ENCODE measurements at regions of chr5 and their contacts with region 1.

Region 1: GRCh38 chr5:138035605-138036537 is 3.0 kb upstream of the FAM13B start:
- H3K4me3 Mint-ChIP-seq: no peak overlapping the region
- H3K27ac Mint-ChIP-seq: no peak overlapping the region
- H3K4me1 Mint-ChIP-seq: peaks cover 26% of the 10 kb centered on the region
- H3K27me3 Mint-ChIP-seq: peaks cover 7% of the 10 kb centered on the region

Region 2: DNA sequence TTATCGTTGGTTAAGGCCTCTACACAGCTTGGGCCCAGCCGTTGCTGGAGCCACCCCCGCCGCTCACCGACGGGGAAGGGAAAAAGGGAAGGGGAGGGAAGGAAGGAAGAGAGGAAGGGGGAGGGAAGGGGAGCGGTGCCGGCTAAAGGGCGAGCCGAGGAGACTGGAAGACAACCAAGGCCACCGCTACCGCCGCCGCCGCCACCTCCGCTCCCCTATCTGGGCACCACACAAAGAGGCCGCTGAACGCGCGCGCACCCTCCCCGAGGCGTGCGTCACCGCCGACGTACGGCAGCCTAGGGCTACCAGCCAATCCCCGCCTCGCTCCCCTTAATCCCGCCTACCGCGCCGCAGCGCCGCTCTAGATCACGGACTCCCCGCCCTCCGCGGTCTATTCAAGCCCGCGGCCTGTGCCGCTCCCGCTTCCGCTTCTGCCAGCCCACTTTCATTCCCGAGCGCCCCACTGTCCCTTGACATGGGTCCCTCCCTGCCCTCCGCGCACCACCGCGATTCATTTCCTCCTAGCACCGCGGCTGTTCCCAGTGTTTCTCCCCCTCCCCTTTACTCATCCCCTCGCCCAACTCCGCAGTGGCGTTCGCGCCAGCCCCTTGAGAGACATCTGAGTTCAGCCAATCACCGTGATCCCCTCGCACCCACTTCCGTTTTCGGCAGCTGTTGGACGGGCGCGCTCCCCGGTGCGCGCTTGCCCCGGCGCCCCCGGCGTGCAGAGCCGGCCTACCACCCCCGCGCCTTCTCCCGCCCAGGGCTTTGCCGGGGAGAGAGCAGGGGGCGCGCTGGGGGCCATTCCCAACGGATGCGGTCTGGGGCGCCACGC is 281.5 kb before region 1 on chr5 and contains the start of gene HNRNPA0:
- intact Hi-C with region 1: loop called (anchors 2 kb)
- H3K4me3 Mint-ChIP-seq: peak within 1 kb of the TSS; percentile 99
- H3K27ac Mint-ChIP-seq: peak within 1 kb of the TSS; percentile 100
- H3K4me1 Mint-ChIP-seq: peaks cover 15% of the 10 kb centered on the region
- H3K27me3 Mint-ChIP-seq: no peaks in the 10 kb centered on the region

Region 3: DNA sequence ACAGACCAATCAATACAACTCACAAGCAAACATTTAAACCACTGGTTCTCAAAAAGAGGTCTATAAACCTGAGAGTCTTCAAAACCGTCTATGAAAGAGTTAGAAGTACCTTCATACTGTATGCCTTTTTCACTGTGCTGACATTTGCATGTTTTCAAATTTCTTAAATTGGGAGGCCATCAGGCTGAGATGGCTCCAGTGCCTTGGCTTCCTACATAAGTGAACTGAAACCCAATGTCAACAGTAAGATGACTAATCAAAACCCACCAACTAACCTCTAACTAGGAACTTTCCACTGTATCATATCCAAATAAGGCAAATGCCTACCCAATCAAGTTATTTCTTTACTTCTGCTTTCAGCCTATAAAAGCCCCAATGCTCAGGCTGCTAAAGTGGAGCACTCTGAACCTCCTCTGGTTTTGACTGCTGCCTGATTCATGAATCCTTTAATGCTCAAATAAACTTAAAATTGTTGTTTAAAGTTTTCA is 38.1 kb before region 1 on chr5:
- intact Hi-C with region 1: loop called (anchors 5 kb)
- H3K4me3 Mint-ChIP-seq: no peak overlapping the region
- H3K27ac Mint-ChIP-seq: peak overlapping the region; percentile 12
- H3K4me1 Mint-ChIP-seq: peaks cover 24% of the 10 kb centered on the region
- H3K27me3 Mint-ChIP-seq: no peaks in the 10 kb centered on the region

Region 4: DNA sequence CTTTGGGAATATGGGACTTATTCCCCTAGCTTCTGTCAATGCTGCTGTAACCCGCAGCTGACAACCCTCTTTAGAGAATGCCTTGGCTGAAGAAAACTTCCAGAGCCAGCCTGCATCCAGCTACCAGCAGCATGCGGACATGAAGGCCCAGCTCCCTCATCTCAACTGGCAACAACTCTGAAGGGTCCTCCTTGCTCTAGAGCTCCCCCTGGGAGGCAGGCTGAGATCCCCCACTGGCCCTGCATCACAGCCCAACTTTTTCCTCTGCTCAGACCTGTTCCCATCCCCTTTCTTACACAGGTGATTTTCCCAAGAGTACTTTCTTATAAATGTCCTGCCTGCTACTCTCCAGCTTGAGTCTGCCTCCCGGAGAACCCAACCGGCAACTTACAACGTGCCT is 29.2 kb after region 1 on chr5:
- intact Hi-C with region 1: loop called (anchors 1 kb)
- H3K4me3 Mint-ChIP-seq: no peak overlapping the region
- H3K27ac Mint-ChIP-seq: no peak overlapping the region
- H3K4me1 Mint-ChIP-seq: peaks cover 15% of the 10 kb centered on the region
- H3K27me3 Mint-ChIP-seq: peaks cover 5% of the 10 kb centered on the region

Region 5: DNA sequence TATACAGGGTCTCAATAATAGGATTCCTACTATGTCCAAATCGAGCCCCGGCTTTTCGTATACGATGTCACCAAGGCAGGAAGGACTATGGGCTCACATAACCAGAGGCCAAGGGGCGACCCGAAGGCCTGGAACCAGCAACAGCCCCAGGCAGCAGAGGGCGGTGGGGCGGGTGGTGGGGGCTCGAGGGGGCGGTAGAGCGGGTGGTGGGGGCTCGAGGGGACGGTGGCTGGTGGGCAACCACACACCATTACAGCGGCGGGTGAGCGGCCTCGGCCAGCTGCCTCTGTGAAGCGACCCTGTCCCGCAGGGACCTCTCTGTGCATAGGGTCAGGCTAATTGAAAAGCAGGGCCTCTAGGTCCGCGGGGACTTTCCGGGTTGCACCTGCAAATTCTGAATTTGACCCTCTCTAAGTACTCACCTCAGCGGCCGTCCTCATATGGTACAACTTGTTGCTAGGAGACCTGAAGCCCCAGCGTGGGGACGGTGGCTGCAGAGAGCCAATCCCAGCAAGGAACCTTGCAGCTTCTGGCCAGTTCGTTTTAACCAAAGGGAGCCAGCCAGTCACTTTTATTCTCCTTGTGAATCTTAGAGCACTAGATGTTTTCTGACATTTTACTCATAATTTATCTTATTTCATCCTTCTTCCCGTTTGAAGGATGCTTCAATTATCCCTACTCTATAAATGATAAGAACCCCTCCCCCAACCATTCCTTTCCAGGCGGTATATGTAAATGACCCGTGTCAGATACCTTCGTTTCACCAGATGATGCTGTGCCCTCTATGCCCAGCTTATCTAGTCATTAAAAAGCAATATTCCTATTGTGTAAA is 103.3 kb after region 1 on chr5 and contains the start of gene NME5:
- intact Hi-C with region 1: loop called (anchors 2 kb)
- H3K4me3 Mint-ChIP-seq: peak within 1 kb of the TSS; percentile 23
- H3K27ac Mint-ChIP-seq: no peak within 1 kb of the TSS
- H3K4me1 Mint-ChIP-seq: peaks cover 15% of the 10 kb centered on the region
- H3K27me3 Mint-ChIP-seq: peaks cover 55% of the 10 kb centered on the region

Region 6: DNA sequence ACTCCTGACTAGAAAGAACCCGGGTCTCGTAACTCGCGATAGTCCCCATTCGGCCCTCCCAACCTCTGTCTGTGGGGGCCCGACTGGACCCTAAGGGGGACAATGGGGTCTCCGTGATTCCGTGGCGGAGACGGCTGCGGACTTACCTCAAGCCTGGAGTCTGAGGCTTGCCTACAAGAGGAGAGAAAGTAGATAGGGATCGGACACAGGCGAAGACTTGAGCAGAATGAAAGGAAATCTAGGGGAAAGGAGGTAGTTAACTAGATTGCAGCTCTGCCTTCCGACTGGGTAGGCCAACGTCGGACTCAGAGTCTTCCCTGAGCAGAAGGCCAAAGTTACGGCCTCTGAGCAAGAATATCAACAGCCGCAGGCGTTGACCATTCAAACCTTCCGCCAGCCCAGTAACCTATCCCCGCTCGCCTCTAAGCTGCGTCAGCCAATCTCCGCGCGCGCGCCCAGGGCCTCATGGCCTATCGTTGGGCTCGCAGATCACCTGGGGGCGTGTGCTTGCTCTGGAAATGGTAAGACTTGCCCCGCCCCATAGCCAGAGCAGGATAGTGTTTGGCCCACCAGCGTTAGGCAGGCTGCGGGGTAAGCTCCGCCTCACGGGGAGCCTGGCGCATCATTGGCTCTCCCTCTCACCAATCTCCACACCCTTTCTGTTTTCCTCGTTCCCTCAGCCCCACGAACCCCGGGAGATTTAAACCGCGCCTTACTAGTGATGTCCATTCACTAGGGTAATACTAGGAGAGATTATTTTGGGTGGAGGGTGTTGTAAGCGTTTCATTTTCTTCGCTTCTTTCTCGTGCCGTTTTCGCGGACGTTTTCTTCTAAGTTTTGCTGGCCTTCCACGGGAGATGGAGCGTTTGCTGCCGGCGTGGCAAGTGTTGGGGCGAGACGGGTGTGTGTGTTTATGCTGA is 295.8 kb after region 1 on chr5 and contains the start of gene CDC25C:
- intact Hi-C with region 1: loop called (anchors 5 kb)
- H3K4me3 Mint-ChIP-seq: peak within 1 kb of the TSS; percentile 80
- H3K27ac Mint-ChIP-seq: peak within 1 kb of the TSS; percentile 57
- H3K4me1 Mint-ChIP-seq: peaks cover 27% of the 10 kb centered on the region
- H3K27me3 Mint-ChIP-seq: no peaks in the 10 kb centered on the region

Region 7: GRCh38 chr5:138488481-138488945 is 452.6 kb after region 1 on chr5:
- intact Hi-C with region 1: no loop called
- H3K4me3 Mint-ChIP-seq: no peak overlapping the region
- H3K27ac Mint-ChIP-seq: no peak overlapping the region
- H3K4me1 Mint-ChIP-seq: peaks cover 50% of the 10 kb centered on the region
- H3K27me3 Mint-ChIP-seq: peaks cover 36% of the 10 kb centered on the region